ACHN (cell line): ENCODE measurements at regions of chr9 and their contacts with region 1.

Region 1: GRCh38 chr9:114082017-114082762 is 4.1 kb upstream of the AMBP start:
- DNase-seq: peak; percentile 87

Region 2: GRCh38 chr9:114291064-114291474 is 208.9 kb after region 1 on chr9:
- in situ Hi-C with region 1: loop called (anchors 25 kb)
- DNase-seq: peak; percentile 60